GM12878 (cell line): ENCODE measurements at regions of chrX and their contacts with region 1.

Region 1: DNA sequence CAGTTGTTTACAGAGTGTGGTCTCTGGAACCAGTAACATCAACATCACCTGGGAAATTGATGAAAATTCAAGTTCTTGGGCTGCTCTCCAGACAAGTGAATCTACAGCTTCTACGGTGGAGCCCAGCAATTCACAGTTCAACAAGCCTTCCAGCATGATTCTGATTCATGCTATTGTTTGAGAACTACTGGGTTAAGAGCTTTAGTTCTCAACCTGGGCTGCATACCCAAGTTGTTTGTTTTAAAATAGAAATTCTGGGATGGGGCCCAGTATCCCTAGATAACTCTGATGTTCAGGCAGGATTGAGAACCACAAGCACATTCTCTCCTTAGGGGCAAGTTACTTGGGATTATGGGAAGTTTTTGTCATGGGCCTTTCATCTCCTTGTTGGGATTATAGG is 37.9 kb upstream of the PGK1 start:
- DNase-seq: no peak
- ATAC-seq: no peak
- H3K4me3 ChIP-seq: no peak overlapping the region
- H3K27ac ChIP-seq: peak overlapping the region; percentile 87
- H3K4me1 ChIP-seq: peaks cover 19% of the 10 kb centered on the region
- H3K27me3 ChIP-seq: no peaks in the 10 kb centered on the region
- CTCF ChIP-seq: no peak
- EP300 ChIP-seq: no peak
- POLR2A ChIP-seq: no peak
- RAD21 ChIP-seq: no peak

Region 2: DNA sequence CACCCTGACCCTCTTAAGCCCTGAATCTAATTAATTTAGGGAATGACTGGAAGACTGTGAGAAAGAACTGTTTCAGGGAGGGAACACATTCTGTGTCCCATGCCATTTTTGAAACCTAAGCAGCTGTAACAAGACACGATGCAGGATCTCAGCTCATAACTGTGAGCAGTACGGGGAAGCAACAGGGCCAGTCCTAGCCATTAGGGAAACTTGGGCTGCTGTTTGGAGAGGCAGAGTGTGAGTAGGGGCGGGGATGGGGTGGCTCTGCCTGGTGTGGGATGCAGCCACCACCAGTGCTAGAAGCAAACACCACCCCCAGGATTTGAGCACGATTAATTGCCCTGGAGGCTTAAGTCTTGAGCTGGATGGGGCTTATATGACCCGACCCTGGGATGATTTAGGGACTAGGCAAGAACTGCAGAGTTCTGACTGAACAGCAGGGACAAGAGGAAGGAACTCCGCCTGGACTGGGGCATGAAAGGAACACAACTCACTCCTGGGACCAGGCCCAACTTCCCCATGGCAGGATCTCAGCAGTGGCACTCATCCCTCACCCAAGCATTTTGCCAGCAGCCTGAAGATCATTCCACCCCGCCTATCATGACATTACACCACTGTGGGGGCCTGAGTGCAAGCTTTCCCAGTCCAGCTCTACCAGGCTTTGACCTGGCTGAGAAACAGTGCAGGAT is 323.2 kb before region 1 on chrX:
- CTCF ChIA-PET with region 1: no interaction called
- POLR2A ChIA-PET with region 1: no interaction called
- RAD21 ChIA-PET with region 1: no interaction called
- SMC1A ChIA-PET with region 1: no interaction called
- in situ Hi-C with region 1: no loop called
- intact Hi-C with region 1: no loop called
- DNase-seq: no peak
- ATAC-seq: no peak; the same call in 2 of the 3 replicates
- H3K4me3 ChIP-seq: no peak overlapping the region
- H3K27ac ChIP-seq: no peak overlapping the region
- H3K4me1 ChIP-seq: no peaks in the 10 kb centered on the region
- H3K27me3 ChIP-seq: no peaks in the 10 kb centered on the region
- CTCF ChIP-seq: no peak
- EP300 ChIP-seq: no peak
- POLR2A ChIP-seq: no peak
- RAD21 ChIP-seq: no peak

Region 3: GRCh38 chrX:78092296-78092695 is 26.2 kb after region 1 on chrX:
- CTCF ChIA-PET with region 1: interaction called, 9 read pairs
- POLR2A ChIA-PET with region 1: no interaction called
- RAD21 ChIA-PET with region 1: interaction called, 6 read pairs
- SMC1A ChIA-PET with region 1: interaction called, 10 read pairs
- in situ Hi-C with region 1: no loop called
- intact Hi-C with region 1: no loop called
- DNase-seq: peak; percentile 37
- ATAC-seq: peak; percentile 98
- H3K4me3 ChIP-seq: no peak overlapping the region
- H3K27ac ChIP-seq: no peak overlapping the region
- H3K4me1 ChIP-seq: no peaks in the 10 kb centered on the region
- H3K27me3 ChIP-seq: no peaks in the 10 kb centered on the region
- CTCF ChIP-seq: peak; percentile 45; a peak in 5 of 6 replicates
- EP300 ChIP-seq: no peak
- POLR2A ChIP-seq: no peak
- RAD21 ChIP-seq: peak; percentile 73

Region 4: DNA sequence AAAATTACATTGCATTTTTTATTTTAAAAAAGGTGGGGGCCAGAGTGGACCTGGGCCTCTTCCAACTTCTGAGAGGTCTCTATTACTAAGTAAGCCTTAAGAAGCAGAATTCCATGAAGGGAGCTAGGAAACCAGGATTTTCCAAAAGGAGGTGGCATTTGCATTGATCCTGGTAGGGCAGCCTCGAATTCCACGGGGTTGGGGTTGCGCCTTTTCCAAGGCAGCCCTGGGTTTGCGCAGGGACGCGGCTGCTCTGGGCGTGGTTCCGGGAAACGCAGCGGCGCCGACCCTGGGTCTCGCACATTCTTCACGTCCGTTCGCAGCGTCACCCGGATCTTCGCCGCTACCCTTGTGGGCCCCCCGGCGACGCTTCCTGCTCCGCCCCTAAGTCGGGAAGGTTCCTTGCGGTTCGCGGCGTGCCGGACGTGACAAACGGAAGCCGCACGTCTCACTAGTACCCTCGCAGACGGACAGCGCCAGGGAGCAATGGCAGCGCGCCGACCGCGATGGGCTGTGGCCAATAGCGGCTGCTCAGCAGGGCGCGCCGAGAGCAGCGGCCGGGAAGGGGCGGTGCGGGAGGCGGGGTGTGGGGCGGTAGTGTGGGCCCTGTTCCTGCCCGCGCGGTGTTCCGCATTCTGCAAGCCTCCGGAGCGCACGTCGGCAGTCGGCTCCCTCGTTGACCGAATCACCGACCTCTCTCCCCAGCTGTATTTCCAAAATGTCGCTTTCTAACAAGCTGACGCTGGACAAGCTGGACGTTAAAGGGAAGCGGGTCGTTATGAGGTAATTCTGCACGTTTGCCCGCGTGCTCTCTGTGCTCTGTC is 37.7 kb after region 1 on chrX and contains the start of gene PGK1:
- CTCF ChIA-PET with region 1: interaction called, 3 read pairs
- POLR2A ChIA-PET with region 1: interaction called, 7 read pairs
- RAD21 ChIA-PET with region 1: no interaction called
- SMC1A ChIA-PET with region 1: interaction called, 5 read pairs
- in situ Hi-C with region 1: no loop called
- intact Hi-C with region 1: loop called (anchors 5 kb)
- DNase-seq: peak; percentile 84
- ATAC-seq: peak; percentile 96
- H3K4me3 ChIP-seq: peak within 1 kb of the TSS; percentile 82
- H3K27ac ChIP-seq: peak within 1 kb of the TSS; percentile 86
- H3K4me1 ChIP-seq: peaks cover 3% of the 10 kb centered on the region; the same call in 1 of the 2 replicates
- H3K27me3 ChIP-seq: no peaks in the 10 kb centered on the region
- CTCF ChIP-seq: no peak
- EP300 ChIP-seq: 0 out of 4 replicates have a peak, but pooled peaks of 1 of the 2 experiments have one; percentile 19
- POLR2A ChIP-seq: peak; percentile 98
- RAD21 ChIP-seq: no peak
- polyA plus RNA-seq, gene PGK1: 633 to 835 TPM